ENCODE measurements at regions of chr19 and their contacts with region 1.

Region 1: DNA sequence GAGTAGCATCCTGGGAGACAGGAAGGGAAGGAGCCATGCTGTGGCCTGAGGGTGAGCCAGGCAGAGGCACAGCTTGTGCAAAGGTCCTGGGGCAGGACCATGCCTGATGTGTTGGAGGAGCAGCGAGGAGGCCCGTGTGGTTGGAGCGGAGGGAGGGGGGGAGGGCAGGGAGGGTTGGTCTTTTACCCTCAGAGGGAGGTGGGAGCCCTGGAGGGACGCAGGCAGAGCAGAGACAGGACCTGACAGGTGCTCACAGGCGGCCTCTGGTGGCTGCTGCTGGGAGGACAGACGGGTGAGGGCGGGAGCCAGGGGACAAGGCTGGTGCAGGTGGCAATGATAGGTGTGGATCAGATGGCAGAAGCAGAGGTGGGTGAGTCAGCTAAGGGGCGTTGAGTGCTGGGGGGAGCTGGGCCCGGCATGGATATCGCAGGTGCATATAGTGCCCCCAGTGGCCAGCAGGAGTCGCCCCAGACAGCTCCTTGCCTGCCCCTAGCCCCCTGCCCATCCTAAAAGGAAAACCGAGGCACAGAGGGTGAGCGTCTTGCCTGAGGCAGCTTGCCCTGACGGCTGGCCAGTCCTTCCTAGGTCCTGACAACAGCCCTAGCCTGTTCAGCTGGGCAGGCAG is 9.8 kb upstream of the GNA15 start:
- DNase-seq: no peak
- H3K4me3 ChIP-seq: no peak overlapping the region
- H3K27ac ChIP-seq: no peak overlapping the region
- H3K27me3 ChIP-seq: no peaks in the 10 kb centered on the region
- CTCF ChIP-seq: peak; percentile 67

Region 2: GRCh38 chr19:3065675-3066357 is 60.2 kb before region 1 on chr19:
- CTCF ChIA-PET with region 1: no interaction called
- POLR2A ChIA-PET with region 1: no interaction called
- DNase-seq: no peak
- H3K4me3 ChIP-seq: no peak overlapping the region
- H3K27ac ChIP-seq: no peak overlapping the region
- H3K27me3 ChIP-seq: no peaks in the 10 kb centered on the region
- CTCF ChIP-seq: no peak

Region 3: DNA sequence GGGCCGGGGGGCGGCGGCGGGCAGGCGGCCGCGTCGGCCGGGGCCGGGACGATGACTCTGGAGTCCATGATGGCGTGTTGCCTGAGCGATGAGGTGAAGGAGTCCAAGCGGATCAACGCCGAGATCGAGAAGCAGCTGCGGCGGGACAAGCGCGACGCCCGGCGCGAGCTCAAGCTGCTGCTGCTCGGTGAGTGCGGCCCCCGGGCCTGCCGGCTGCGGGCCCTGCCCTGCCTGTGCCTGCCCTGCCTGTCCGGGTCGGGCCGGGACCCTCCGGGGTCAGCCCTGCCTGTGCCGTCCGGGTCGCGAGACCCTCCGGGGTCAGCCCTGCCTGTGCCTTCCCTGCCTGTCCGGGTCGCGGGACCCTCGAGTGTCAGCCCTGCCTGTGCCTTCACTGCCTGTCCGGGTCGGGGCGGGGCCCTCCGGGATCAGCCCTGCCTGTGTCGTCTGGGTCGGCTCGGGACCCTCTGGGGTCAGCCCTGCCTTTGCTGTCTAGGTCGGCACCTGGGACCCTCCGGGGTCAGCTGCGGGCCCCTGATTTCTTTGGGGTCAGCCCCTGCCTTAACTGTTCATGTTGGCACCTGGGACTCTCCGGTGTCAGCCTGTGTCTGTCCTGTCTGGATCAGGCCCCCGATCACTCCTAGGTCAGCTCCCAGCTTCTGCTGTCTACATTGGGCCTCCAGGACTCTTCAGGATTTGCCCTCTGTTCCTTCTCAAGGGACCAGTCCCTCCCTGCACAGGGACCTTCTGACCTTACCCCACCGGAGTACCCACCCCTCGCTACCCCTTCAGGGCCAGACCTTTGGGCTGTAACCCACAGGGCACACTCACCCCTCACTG is 31.2 kb before region 1 on chr19:
- CTCF ChIA-PET with region 1: no interaction called
- POLR2A ChIA-PET with region 1: no interaction called
- DNase-seq: no peak
- H3K4me3 ChIP-seq: peak overlapping the region; percentile 87
- H3K27ac ChIP-seq: peak overlapping the region; percentile 21
- H3K27me3 ChIP-seq: no peaks in the 10 kb centered on the region
- CTCF ChIP-seq: no peak

Region 4: DNA sequence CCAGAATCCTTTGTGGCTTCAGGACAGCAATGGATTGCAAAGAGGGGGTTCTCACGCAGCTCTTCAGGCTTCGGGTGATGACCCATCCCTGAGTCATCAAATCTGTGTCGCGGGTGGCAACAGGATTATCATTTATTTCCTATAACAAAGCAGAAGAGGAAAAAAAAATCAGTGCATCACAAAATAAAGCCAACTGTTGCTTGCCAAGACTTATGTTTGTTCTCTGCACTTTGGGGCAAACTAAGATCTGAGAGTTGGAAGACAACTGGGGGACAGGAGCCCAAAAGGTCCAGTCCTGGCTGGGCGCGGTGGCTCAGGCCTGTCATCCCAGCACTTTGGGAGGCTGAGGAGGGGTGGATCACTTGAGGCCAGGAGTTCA is 16.3 kb after region 1 on chr19:
- CTCF ChIA-PET with region 1: interaction called, 13 read pairs
- POLR2A ChIA-PET with region 1: no interaction called
- DNase-seq: peak; percentile 42
- H3K4me3 ChIP-seq: no peak overlapping the region
- H3K27ac ChIP-seq: peak overlapping the region; percentile 91
- H3K27me3 ChIP-seq: no peaks in the 10 kb centered on the region
- CTCF ChIP-seq: no peak

Region 5: DNA sequence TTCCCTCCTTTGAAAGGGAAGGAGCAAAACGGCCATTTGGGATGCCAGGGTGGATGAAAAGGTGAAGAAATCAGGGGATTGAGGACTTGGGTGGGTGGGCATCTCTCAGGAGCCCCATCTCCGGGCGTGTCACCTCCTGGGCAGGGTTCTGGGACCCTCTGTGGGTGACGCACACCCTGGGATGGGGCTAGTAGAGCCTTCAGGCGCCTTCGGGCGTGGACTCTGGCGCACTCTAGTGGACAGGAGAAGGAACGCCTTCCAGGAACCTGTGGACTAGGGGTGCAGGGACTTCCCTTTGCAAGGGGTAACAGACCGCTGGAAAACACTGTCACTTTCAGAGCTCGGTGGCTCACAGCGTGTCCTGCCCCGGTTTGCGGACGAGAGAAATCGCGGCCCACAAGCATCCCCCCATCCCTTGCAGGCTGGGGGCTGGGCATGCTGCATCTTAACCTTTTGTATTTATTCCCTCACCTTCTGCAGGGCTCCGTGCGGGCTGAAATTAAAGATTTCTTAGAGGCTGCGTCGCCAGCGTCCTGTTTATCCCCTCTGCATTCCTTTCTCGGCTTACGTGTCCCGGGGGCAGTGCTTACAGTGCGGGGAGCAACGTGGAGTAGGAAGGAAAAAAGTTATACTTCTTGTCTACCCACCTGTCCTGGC is 37.3 kb after region 1 on chr19:
- CTCF ChIA-PET with region 1: interaction called, 30 read pairs
- POLR2A ChIA-PET with region 1: no interaction called
- DNase-seq: peak; percentile 30
- H3K4me3 ChIP-seq: no peak overlapping the region
- H3K27ac ChIP-seq: no peak overlapping the region
- H3K27me3 ChIP-seq: no peaks in the 10 kb centered on the region
- CTCF ChIP-seq: peak; percentile 95

Measured in AG04450 (cell line).